HepG2 (cell line): ENCODE measurements at regions of chr2 and their contacts with region 1.

Region 1: GRCh38 chr2:158120664-158121641 is 19.3 kb downstream of the UPP2 start:
- DNase-seq: no peak
- ATAC-seq: no peak
- H3K4me3 ChIP-seq: no peak overlapping the region
- H3K27ac ChIP-seq: no peak overlapping the region
- H3K4me1 ChIP-seq: peaks cover 46% of the 10 kb centered on the region
- H3K27me3 ChIP-seq: no peaks in the 10 kb centered on the region
- CTCF ChIP-seq: no peak
- EP300 ChIP-seq: no peak
- POLR2A ChIP-seq: no peak
- RAD21 ChIP-seq: no peak

Region 2: DNA sequence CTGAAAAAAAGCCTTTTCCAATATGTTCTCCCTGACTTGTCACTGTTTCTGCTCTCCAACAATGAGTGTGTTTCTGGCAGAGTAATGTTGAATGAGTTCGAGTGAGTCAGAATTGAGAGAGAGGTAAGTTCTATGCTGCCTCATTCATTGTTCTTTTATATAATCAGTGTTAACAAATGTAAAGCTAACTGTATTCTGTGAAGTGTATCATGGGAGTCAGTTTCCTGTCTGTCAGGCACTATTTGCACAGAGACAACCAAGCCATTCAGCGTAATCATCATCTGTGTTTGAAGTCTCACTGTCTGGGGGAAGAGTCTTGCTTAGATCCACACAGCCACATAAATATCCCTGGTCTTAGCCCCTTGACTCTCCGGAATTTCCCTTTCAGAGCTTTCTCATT is 41.3 kb before region 1 on chr2:
- CTCF ChIA-PET with region 1: no interaction called
- POLR2A ChIA-PET with region 1: no interaction called
- in situ Hi-C with region 1: no loop called
- intact Hi-C with region 1: loop called (anchors 2 kb)
- DNase-seq: peak; percentile 98
- ATAC-seq: peak; percentile 100
- H3K4me3 ChIP-seq: no peak overlapping the region; a peak in 2 of 6 replicates
- H3K27ac ChIP-seq: peak overlapping the region; percentile 36
- H3K4me1 ChIP-seq: peaks cover 24% of the 10 kb centered on the region
- H3K27me3 ChIP-seq: no peaks in the 10 kb centered on the region
- CTCF ChIP-seq: no peak
- EP300 ChIP-seq: peak in 1 of 2 experiments; percentile 93; a peak in 2 of 4 replicates
- POLR2A ChIP-seq: no peak
- RAD21 ChIP-seq: no peak